ENCODE measurements at regions of chr11 and their contacts with region 1.

Region 1: GRCh38 chr11:121591405-121592033 is 138.8 kb upstream of the SORL1-AS1 start:
- DNase-seq: peak; percentile 44 to 89
- ATAC-seq: peak; percentile 89 to 94 (median 92)
- H3K4me3 ChIP-seq: no peak overlapping the region
- H3K4me3 Mint-ChIP-seq: no peak overlapping the region
- H3K27ac ChIP-seq: no peak overlapping the region
- H3K27ac Mint-ChIP-seq: peak overlapping the region; percentile 52 to 73
- H3K4me1 ChIP-seq: peaks cover 18% of the 10 kb centered on the region
- H3K4me1 Mint-ChIP-seq: peaks cover 16 to 30% of the 10 kb centered on the region in 2 donors
- H3K27me3 ChIP-seq: no peaks in the 10 kb centered on the region
- H3K27me3 Mint-ChIP-seq: no peaks in the 10 kb centered on the region
- CTCF ChIP-seq: peak; percentile 90

Region 2: GRCh38 chr11:121249039-121249663 is 342.4 kb before region 1 on chr11:
- intact Hi-C with region 1: loop called (anchors 1 kb)
- DNase-seq: peak in 1 of 2 donors; percentile 64
- ATAC-seq: peak; percentile 68 to 76 (median 73)
- H3K4me3 ChIP-seq: no peak overlapping the region
- H3K4me3 Mint-ChIP-seq: no peak overlapping the region
- H3K27ac ChIP-seq: no peak overlapping the region
- H3K27ac Mint-ChIP-seq: no peak overlapping the region
- H3K4me1 ChIP-seq: no peaks in the 10 kb centered on the region
- H3K4me1 Mint-ChIP-seq: peaks cover 0 to 4% of the 10 kb centered on the region in 2 donors
- H3K27me3 ChIP-seq: no peaks in the 10 kb centered on the region
- H3K27me3 Mint-ChIP-seq: peaks cover 9 to 17% of the 10 kb centered on the region in 2 donors
- CTCF ChIP-seq: peak; percentile 78

Region 3: GRCh38 chr11:121318848-121319834 is 272.4 kb before region 1 on chr11:
- intact Hi-C with region 1: loop called (anchors 1 kb)
- DNase-seq: peak in 1 of 2 donors; percentile 73
- ATAC-seq: peak; percentile 69 to 83 (median 80)
- H3K4me3 ChIP-seq: no peak overlapping the region
- H3K4me3 Mint-ChIP-seq: no peak overlapping the region
- H3K27ac ChIP-seq: no peak overlapping the region
- H3K27ac Mint-ChIP-seq: no peak overlapping the region
- H3K4me1 ChIP-seq: no peaks in the 10 kb centered on the region
- H3K4me1 Mint-ChIP-seq: peaks cover 0 to 9% of the 10 kb centered on the region in 2 donors
- H3K27me3 ChIP-seq: no peaks in the 10 kb centered on the region
- H3K27me3 Mint-ChIP-seq: peaks cover 15 to 18% of the 10 kb centered on the region in 2 donors
- CTCF ChIP-seq: peak; percentile 56

Region 4: DNA sequence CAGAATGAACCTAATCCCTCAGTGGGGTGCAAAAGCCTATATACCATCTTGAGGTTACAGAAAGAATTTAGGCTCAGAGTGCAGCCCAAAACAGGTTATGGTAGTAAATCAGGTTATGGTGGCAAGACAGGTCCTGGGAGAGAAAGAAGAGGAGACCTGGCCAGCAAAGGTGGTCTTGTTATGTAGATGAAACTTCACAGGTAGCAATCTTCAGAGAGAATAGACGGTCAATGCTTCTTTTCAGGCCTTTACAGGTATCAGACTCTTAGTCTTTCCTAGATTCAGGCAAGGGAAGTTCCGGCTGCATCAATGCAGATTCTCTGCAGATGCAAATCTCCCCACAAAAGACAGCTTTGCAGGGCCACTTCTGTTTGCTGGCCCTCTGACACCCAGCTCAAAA is 185.2 kb before region 1 on chr11:
- intact Hi-C with region 1: no loop called
- DNase-seq: no peak
- ATAC-seq: no peak
- H3K4me3 ChIP-seq: no peak overlapping the region
- H3K4me3 Mint-ChIP-seq: no peak overlapping the region
- H3K27ac ChIP-seq: no peak overlapping the region
- H3K27ac Mint-ChIP-seq: no peak overlapping the region
- H3K4me1 ChIP-seq: no peaks in the 10 kb centered on the region
- H3K4me1 Mint-ChIP-seq: no peaks in the 10 kb centered on the region
- H3K27me3 ChIP-seq: no peaks in the 10 kb centered on the region
- H3K27me3 Mint-ChIP-seq: peaks cover 0 to 3% of the 10 kb centered on the region in 2 donors
- CTCF ChIP-seq: no peak

Region 5: GRCh38 chr11:121630041-121630440 is 38.5 kb after region 1 on chr11:
- intact Hi-C with region 1: no loop called
- DNase-seq: no peak
- ATAC-seq: no peak
- H3K4me3 ChIP-seq: no peak overlapping the region
- H3K4me3 Mint-ChIP-seq: no peak overlapping the region
- H3K27ac ChIP-seq: no peak overlapping the region
- H3K27ac Mint-ChIP-seq: peak overlapping the region; percentile 26 to 29
- H3K4me1 ChIP-seq: no peaks in the 10 kb centered on the region
- H3K4me1 Mint-ChIP-seq: peaks cover 0 to 6% of the 10 kb centered on the region in 2 donors
- H3K27me3 ChIP-seq: no peaks in the 10 kb centered on the region
- H3K27me3 Mint-ChIP-seq: no peaks in the 10 kb centered on the region
- CTCF ChIP-seq: no peak

Region 6: GRCh38 chr11:121777056-121777455 is 185.5 kb after region 1 on chr11:
- intact Hi-C with region 1: no loop called
- DNase-seq: no peak
- ATAC-seq: no peak
- H3K4me3 ChIP-seq: no peak overlapping the region
- H3K4me3 Mint-ChIP-seq: no peak overlapping the region
- H3K27ac ChIP-seq: no peak overlapping the region
- H3K27ac Mint-ChIP-seq: no peak overlapping the region
- H3K4me1 ChIP-seq: no peaks in the 10 kb centered on the region
- H3K4me1 Mint-ChIP-seq: no peaks in the 10 kb centered on the region
- H3K27me3 ChIP-seq: no peaks in the 10 kb centered on the region
- H3K27me3 Mint-ChIP-seq: no peaks in the 10 kb centered on the region
- CTCF ChIP-seq: no peak